Sigmoid colon (tissue), 7 donors: ENCODE measurements at regions of chr9 and their contacts with region 1.

Region 1: DNA sequence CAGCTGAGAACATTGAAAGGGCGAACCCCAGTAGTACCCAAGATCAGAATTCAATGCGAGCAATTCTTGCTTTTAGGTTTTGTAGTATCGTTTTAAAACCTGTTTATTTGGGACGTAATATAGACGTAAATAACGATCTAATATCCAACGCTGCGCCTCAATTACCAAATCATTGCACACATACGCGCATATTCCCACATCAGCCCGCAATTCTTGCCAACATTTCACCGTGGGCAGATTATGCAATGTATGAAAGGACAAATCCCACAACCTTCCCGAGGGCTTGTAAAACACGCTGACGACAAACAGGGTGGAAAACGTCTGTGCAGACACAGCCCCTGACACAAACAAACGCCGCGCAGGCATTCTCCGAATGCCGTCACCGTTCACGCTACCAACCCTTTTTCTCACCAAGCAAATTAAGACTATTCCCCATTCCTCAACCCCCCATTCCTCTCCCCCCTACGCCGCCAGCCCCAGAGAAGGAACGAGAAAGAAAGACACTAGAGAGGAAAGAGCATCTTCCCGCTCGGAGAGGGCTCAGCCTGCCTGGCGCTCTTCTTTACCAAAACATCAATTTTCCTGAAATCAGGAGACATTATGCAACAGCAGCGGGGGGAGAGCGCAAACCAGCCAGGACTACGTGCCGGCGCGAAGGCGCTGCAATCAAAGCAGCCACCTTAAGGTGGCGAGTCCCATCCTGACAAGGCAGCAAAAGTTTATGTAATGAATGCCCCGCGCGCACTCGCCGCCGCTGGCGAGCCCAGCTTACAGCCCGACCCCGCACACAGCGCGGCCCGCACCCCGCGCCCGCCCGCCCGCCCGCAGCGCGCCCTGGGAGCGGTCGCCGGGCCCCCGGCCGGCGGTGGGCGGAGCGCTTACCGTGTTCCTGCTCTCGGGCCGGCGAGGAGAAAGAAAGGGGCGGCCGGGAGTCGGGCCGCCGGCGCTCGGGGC is 597 bp downstream of the NFIL3 start:
- DNase-seq: peak; percentile 96
- H3K4me3 ChIP-seq: peak overlapping the region; percentile 67 to 85 (median 78)
- H3K27ac ChIP-seq: peak overlapping the region; percentile 94 to 98 (median 96)
- H3K4me1 ChIP-seq: peaks cover 0 to 45% (median 32%) of the 10 kb centered on the region in 4 donors
- H3K27me3 ChIP-seq: no peaks in the 10 kb centered on the region
- CTCF ChIP-seq: peak in 2 of 4 experiments; percentile 12 to 16
- EP300 ChIP-seq: peak; percentile 91 to 100 (median 99)
- POLR2A ChIP-seq: peak; percentile 20 to 26

Region 2: GRCh38 chr9:91036826-91037510 is 386.1 kb before region 1 on chr9:
- intact Hi-C with region 1: loop called (anchors 2 kb)
- DNase-seq: peak; percentile 93
- H3K4me3 ChIP-seq: no peak overlapping the region
- H3K27ac ChIP-seq: peak overlapping the region; percentile 23 to 67 (median 60)
- H3K4me1 ChIP-seq: peaks cover 0 to 20% (median 19%) of the 10 kb centered on the region in 4 donors
- H3K27me3 ChIP-seq: no peaks in the 10 kb centered on the region
- CTCF ChIP-seq: peak; percentile 55 to 80 (median 60)
- EP300 ChIP-seq: no peak
- POLR2A ChIP-seq: no peak

Region 3: DNA sequence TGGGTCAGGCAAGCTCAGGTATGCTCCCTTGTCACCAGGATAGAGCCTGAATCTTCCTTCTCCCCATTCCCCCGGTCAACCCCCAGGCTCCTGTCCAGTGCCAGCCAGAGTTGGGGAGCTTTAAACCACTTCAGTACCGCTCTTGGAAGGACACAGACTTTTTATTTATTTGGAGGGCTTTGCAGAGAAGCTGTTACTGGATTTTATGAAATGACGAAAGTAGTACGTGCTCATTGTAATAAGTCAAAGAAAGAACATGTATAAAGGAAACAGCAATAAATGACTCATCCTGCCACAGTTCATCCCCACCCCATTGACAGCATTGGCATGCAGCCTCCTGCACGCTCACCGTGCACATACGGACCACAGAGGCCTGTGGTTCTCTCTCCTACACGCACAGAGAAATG is 291.6 kb before region 1 on chr9:
- intact Hi-C with region 1: loop called (anchors 5 kb)
- DNase-seq: peak; percentile 87
- H3K4me3 ChIP-seq: no peak overlapping the region
- H3K27ac ChIP-seq: peak overlapping the region in 3 of 4 donors; percentile 18 to 68 (median 62)
- H3K4me1 ChIP-seq: peaks cover 2 to 13% (median 13%) of the 10 kb centered on the region in 4 donors
- H3K27me3 ChIP-seq: no peaks in the 10 kb centered on the region
- CTCF ChIP-seq: no peak
- EP300 ChIP-seq: peak; percentile 64 to 94 (median 88)
- POLR2A ChIP-seq: no peak

Region 4: GRCh38 chr9:91301161-91301560 is 121.9 kb before region 1 on chr9:
- intact Hi-C with region 1: loop called (anchors 2 kb)
- DNase-seq: peak; percentile 79
- H3K4me3 ChIP-seq: no peak overlapping the region
- H3K27ac ChIP-seq: peak overlapping the region; percentile 69 to 86 (median 78)
- H3K4me1 ChIP-seq: peaks cover 0 to 63% (median 43%) of the 10 kb centered on the region in 4 donors
- H3K27me3 ChIP-seq: no peaks in the 10 kb centered on the region
- CTCF ChIP-seq: no peak
- EP300 ChIP-seq: peak in 1 of 4 donors; percentile 14
- POLR2A ChIP-seq: no peak

Region 5: GRCh38 chr9:91681461-91682305 is 258.6 kb after region 1 on chr9:
- intact Hi-C with region 1: loop called (anchors 5 kb)
- DNase-seq: peak; percentile 88
- H3K4me3 ChIP-seq: peak overlapping the region in 2 of 4 donors; percentile 21 to 22
- H3K27ac ChIP-seq: no peak overlapping the region
- H3K4me1 ChIP-seq: peaks cover 0 to 8% (median 4%) of the 10 kb centered on the region in 4 donors
- H3K27me3 ChIP-seq: no peaks in the 10 kb centered on the region
- CTCF ChIP-seq: peak; percentile 51 to 88 (median 76)
- EP300 ChIP-seq: no peak
- POLR2A ChIP-seq: no peak

Region 6: DNA sequence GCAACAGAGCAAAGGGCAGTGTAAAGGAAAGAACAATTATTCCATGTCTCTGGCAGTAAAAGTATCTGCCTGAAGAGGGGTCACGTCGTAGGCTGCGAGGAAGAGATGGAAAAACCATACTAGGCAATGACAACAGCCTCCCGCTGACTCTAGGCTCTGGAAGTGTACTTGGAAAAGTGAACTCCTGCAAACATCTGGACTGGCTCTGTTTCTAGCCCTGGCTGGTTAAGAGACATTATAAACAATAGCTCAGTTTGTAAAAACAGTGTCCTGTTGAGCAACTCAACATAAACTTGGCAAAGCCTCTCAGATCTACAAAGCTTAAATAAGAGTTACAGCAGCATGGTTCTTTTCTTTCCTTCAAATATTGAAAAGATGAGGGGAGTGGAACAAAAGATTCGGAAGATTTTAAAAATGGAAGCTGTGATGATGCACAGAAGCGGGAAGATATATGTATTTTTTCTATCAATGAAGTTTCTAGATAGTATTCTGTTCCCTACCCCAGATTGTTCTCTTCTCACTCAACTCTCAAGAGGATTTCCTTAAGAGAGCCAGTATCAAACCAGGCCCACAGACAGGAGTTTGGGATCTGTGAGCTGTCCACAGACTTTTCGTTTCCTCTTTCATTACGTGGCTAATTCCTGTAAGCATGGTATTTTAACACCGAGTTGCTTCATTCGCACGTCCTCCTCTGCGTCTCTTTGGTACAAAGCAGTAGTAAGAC is 612.8 kb after region 1 on chr9:
- intact Hi-C with region 1: loop called (anchors 5 kb)
- DNase-seq: peak; percentile 93
- H3K4me3 ChIP-seq: peak overlapping the region in 1 of 4 donors; percentile 13
- H3K27ac ChIP-seq: peak overlapping the region; percentile 63 to 86 (median 80)
- H3K4me1 ChIP-seq: peaks cover 0 to 51% (median 38%) of the 10 kb centered on the region in 4 donors
- H3K27me3 ChIP-seq: no peaks in the 10 kb centered on the region
- CTCF ChIP-seq: no peak
- EP300 ChIP-seq: peak; percentile 62 to 87 (median 67)
- POLR2A ChIP-seq: no peak